Head of caudate nucleus (tissue), 42 donors: ENCODE measurements at regions of chr14 and their contacts with region 1.

Region 1: GRCh38 chr14:36647824-36648753 is 13.6 kb upstream of the PAX9 start:
- DNase-seq: no peak

Region 2: GRCh38 chr14:37142835-37143401 is 494.8 kb after region 1 on chr14:
- intact Hi-C with region 1: loop called (anchors 10 kb)
- DNase-seq: no peak